ENCODE measurements at regions of chr1 and their contacts with region 1.

Region 1: GRCh38 chr1:45569962-45570581 is 13.8 kb upstream of the NASP start:
- DNase-seq: peak; percentile 19 to 91 (median 79)

Region 2: DNA sequence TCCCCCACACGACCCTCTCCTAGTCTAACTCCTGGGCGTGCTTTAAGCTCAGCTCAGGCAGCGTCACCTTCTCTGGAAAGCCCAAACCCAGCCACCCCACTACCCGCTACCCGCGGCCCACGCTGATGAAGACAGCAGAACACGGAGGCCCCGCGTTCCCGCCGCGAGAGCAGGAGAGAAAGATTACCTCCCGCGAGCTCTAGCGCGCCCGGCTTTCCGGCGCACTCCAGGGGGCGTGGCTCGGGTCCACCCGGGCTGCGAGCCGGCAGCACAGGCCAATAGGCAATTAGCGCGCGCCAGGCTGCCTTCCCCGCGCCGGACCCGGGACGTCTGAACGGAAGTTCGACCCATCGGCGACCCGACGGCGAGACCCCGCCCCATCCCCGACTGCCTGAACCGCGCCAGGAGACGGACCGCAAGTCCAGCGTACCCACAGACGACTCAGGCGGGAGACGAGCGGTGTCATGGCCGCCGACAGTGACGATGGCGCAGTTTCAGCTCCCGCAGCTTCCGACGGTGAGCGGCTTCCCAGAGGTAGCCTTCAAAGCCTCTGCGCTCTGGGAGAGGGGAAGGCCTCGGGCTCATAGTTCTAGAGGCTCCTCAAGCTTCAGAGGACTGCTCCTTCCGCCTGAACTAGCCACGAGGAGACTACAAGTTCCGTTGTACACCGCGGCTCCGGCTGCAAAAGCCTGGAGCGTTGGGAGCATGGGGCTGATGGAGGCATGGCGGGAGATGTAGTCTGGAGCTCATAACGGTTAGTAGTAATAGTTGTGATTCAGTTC is 230.1 kb before region 1 on chr1 and contains the starts of genes MUTYH and TOE1:
- intact Hi-C with region 1: loop called (anchors 10 kb)
- DNase-seq: peak; percentile 84 to 96 (median 91)

Region 3: GRCh38 chr1:45359882-45360513 is 210.1 kb before region 1 on chr1:
- intact Hi-C with region 1: loop called (anchors 10 kb)
- DNase-seq: peak; percentile 45 to 89 (median 76)

Region 4: GRCh38 chr1:45518910-45519309 is 51.2 kb before region 1 on chr1:
- intact Hi-C with region 1: loop called (anchors 5 kb)
- DNase-seq: no peak

Region 5: GRCh38 chr1:45608175-45609156 is 38.4 kb after region 1 on chr1:
- intact Hi-C with region 1: no loop called
- DNase-seq: no peak